Sigmoid colon (tissue), 7 donors: ENCODE measurements at regions of chr3 and their contacts with region 1.

Region 1: GRCh38 chr3:41893977-41894376 is 67.9 kb downstream of the ULK4 start:
- DNase-seq: no peak
- H3K4me3 ChIP-seq: no peak overlapping the region
- H3K27ac ChIP-seq: no peak overlapping the region
- H3K4me1 ChIP-seq: no peaks in the 10 kb centered on the region
- H3K27me3 ChIP-seq: no peaks in the 10 kb centered on the region
- CTCF ChIP-seq: peak in 3 of 4 experiments; percentile 20 to 56 (median 30)
- EP300 ChIP-seq: no peak
- POLR2A ChIP-seq: no peak

Region 2: GRCh38 chr3:41961750-41962679 is 68.0 kb after region 1 on chr3 and contains the start of gene ULK4:
- intact Hi-C with region 1: loop called (anchors 10 kb)
- DNase-seq: peak; percentile 99
- H3K4me3 ChIP-seq: peak within 1 kb of the TSS; percentile 79 to 97 (median 90)
- H3K27ac ChIP-seq: peak within 1 kb of the TSS; percentile 88 to 93 (median 90)
- H3K4me1 ChIP-seq: peaks cover 0 to 14% (median 10%) of the 10 kb centered on the region in 4 donors
- H3K27me3 ChIP-seq: no peaks in the 10 kb centered on the region
- CTCF ChIP-seq: no peak
- EP300 ChIP-seq: peak in 1 of 4 donors; percentile 32
- POLR2A ChIP-seq: peak in 1 of 2 donors; percentile 7
- total RNA-seq, gene ULK4: 8.9 to 18.6 (median 16.6) TPM

Region 3: GRCh38 chr3:42101048-42101447 is 207.1 kb after region 1 on chr3:
- intact Hi-C with region 1: loop called (anchors 1 kb)
- DNase-seq: no peak
- H3K4me3 ChIP-seq: no peak overlapping the region
- H3K27ac ChIP-seq: peak overlapping the region; percentile 11 to 70 (median 40)
- H3K4me1 ChIP-seq: peaks cover 0 to 58% (median 47%) of the 10 kb centered on the region in 4 donors
- H3K27me3 ChIP-seq: no peaks in the 10 kb centered on the region
- CTCF ChIP-seq: no peak
- EP300 ChIP-seq: no peak
- POLR2A ChIP-seq: no peak

Region 4: DNA sequence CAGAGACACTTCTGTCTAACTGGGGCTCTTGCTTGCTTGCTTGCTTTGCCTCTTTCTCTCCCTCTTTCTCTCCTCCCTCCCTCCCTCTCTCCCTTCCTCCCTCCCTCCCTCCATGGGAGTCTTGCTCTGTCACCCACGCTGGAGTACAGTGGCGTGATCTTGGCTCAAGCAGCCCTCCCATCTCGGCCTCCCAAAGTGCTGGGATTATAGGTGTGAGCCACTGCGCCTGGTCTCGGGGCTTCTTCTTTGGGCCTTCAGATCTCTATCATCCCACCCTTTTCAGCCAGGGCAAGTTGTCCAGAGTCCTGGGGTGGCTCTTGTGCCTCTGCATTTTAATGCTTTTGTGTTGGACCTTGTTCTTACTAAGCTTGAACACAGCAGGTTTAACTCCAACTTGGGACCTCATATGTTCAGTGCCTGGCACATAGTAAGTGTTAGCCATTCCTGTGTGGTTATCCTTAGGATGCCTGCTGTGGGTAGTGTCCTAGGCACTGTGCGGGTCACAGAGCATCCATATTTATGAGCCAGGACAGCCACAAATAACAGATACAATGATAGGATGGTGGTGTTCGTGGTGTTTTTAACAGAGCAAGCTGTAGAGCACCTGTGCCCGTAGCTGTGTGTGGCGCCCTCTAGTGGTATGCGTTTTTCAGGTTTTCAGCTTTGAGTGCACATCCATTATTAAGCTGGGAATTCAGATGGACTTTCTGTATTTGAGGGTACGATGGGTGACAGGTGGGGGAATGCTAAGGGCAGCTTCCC is 296.9 kb after region 1 on chr3:
- intact Hi-C with region 1: loop called (anchors 2 kb)
- DNase-seq: peak; percentile 77
- H3K4me3 ChIP-seq: no peak overlapping the region
- H3K27ac ChIP-seq: no peak overlapping the region
- H3K4me1 ChIP-seq: peaks cover 0 to 22% (median 9%) of the 10 kb centered on the region in 4 donors
- H3K27me3 ChIP-seq: no peaks in the 10 kb centered on the region
- CTCF ChIP-seq: peak; percentile 17 to 85 (median 76)
- EP300 ChIP-seq: no peak
- POLR2A ChIP-seq: no peak

Region 5: DNA sequence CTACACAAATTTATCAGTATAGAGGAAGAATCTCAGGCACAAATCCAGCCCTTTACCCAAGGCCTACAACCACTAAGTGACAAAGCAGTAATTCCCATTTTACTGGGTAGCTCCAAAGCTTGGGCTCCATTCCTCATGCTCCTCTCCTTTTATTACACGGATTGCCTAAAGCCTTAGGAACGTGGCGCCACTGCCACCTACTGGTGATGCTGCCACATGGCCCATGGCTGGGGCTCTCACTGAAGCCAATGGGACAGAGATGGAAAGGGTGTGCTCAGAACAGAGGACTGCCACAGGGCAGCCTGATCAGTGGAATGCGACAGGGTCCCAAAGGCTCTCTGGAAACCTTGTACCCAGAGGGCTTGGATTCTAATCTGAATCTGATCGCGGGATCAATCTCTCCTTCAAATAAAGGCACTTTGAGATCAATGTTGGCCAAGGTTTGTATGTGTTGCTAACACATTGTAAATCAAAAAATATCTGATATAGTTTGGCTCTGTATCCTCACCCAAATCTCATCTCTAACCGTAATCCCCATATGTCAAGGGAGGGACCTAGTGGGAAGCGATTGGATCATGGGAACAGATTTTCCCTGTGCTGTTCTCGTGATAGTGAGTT is 550.0 kb after region 1 on chr3:
- intact Hi-C with region 1: loop called (anchors 10 kb)
- DNase-seq: peak; percentile 82
- H3K4me3 ChIP-seq: no peak overlapping the region
- H3K27ac ChIP-seq: no peak overlapping the region
- H3K4me1 ChIP-seq: no peaks in the 10 kb centered on the region
- H3K27me3 ChIP-seq: no peaks in the 10 kb centered on the region
- CTCF ChIP-seq: peak; percentile 91 to 97 (median 92)
- EP300 ChIP-seq: no peak
- POLR2A ChIP-seq: no peak